Ascending aorta (tissue), 2 donors: ENCODE measurements at regions of chr6 and their contacts with region 1.

Region 1: DNA sequence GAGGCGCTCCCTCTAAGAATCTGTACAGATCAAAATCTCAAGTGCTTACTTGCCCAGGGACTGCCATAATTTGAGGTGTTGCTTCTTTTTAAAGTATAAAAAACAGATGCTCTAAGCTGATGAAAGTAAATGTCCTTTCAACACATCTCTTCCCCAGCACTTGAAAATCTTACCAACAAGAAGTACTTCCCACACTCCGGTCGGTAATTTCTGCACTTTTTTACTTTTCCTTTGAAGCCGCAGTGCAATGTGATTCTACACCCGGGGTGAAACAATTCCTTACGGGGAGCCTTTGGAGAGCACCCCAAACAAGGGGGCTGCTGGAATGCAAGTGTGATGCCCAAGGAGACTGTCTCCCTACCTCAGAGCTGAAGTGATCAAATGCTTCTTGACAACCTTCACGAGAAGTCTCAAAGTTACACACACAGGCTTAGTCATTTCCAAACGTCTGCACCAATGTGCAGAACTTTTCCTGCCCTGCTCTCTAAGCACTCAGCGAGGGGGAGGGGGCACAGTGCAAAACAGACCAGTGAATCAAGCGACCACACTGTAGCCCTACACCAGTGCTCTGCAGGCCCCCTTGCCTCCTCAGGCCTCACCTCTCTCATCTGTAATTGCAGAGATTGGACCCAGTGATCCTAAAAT is 56.7 kb downstream of the ATXN1 start:
- DNase-seq: no peak
- H3K4me3 ChIP-seq: peak overlapping the region; percentile 11 to 60
- H3K27ac ChIP-seq: peak overlapping the region; percentile 67 to 69
- H3K4me1 ChIP-seq: peaks cover 7 to 39% of the 10 kb centered on the region in 2 donors
- H3K27me3 ChIP-seq: no peaks in the 10 kb centered on the region
- CTCF ChIP-seq: no peak

Region 2: GRCh38 chr6:15662326-15663129 is 1042.0 kb before region 1 on chr6 and contains the start of gene DTNBP1:
- intact Hi-C with region 1: loop called (anchors 10 kb)
- DNase-seq: peak in 1 of 2 donors; percentile 91
- H3K4me3 ChIP-seq: peak within 1 kb of the TSS; percentile 70 to 94
- H3K27ac ChIP-seq: peak within 1 kb of the TSS; percentile 64 to 82
- H3K4me1 ChIP-seq: peaks cover 3 to 6% of the 10 kb centered on the region in 2 donors
- H3K27me3 ChIP-seq: no peaks in the 10 kb centered on the region
- CTCF ChIP-seq: no peak
- total RNA-seq, gene DTNBP1: 5.6 TPM

Region 3: DNA sequence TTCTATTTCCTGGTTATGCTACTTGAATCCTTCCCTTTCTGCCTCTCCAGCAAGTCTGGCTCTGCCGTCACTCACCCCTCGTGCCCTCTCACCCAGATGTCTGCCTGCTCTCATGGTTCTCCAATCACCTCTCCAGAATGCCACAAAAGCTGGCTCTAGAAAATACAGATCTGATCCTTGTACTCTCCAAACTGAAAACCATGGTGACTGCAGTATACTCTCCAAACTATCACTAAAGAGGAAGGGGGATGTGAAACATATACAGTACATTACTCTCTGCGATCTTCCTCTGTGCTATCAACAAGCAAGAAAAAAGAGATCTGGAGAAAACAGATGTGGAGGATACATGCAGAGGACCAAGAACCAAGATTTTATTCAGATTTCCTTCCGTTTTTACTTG is 34.3 kb before region 1 on chr6:
- intact Hi-C with region 1: no loop called
- DNase-seq: no peak
- H3K4me3 ChIP-seq: no peak overlapping the region
- H3K27ac ChIP-seq: peak overlapping the region; percentile 33 to 40
- H3K4me1 ChIP-seq: peaks cover 0 to 37% of the 10 kb centered on the region in 2 donors
- H3K27me3 ChIP-seq: no peaks in the 10 kb centered on the region
- CTCF ChIP-seq: no peak